ENCODE measurements at regions of chr1 and their contacts with region 1.

Region 1: GRCh38 chr1:206912445-206913095 is 9.2 kb downstream of the FCMR start:
- DNase-seq: peak; percentile 54
- H3K4me3 Mint-ChIP-seq: no peak overlapping the region
- H3K27ac Mint-ChIP-seq: no peak overlapping the region
- H3K4me1 Mint-ChIP-seq: peaks cover 46% of the 10 kb centered on the region
- H3K27me3 Mint-ChIP-seq: peaks cover 11% of the 10 kb centered on the region

Region 2: GRCh38 chr1:206635080-206635977 is 277.2 kb before region 1 on chr1 and contains the start of gene DYRK3:
- intact Hi-C with region 1: loop called (anchors 2 kb)
- DNase-seq: peak; percentile 93
- H3K4me3 Mint-ChIP-seq: peak within 1 kb of the TSS; percentile 85
- H3K27ac Mint-ChIP-seq: peak within 1 kb of the TSS; percentile 95
- H3K4me1 Mint-ChIP-seq: peaks cover 23% of the 10 kb centered on the region
- H3K27me3 Mint-ChIP-seq: peaks cover 14% of the 10 kb centered on the region
- total RNA-seq, gene DYRK3: 12.1 and 13.0 TPM in 2 replicates

Region 3: GRCh38 chr1:206725109-206725963 is 187.2 kb before region 1 on chr1:
- intact Hi-C with region 1: loop called (anchors 1 kb)
- DNase-seq: peak; percentile 45
- H3K4me3 Mint-ChIP-seq: no peak overlapping the region
- H3K27ac Mint-ChIP-seq: no peak overlapping the region
- H3K4me1 Mint-ChIP-seq: peaks cover 52% of the 10 kb centered on the region
- H3K27me3 Mint-ChIP-seq: no peaks in the 10 kb centered on the region

Region 4: DNA sequence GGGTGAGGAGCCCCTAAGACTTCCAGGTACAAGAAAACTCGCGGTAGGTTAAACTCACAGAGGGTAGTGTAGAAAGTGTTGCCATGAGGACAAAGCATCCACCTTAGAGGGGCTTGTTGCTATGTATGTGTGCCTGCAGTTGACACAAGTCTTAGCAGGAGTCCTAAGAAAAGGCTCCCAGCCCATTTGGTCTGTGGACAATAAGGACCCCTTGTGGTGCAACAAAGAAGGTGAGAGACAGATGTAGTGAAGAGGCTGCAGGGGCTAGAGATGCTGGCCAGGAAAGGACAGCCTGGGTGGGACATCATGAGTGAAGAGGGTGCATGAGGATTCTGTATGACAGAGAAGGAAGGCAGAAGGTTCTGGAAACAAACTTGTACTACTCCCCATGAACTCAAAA is 104.0 kb before region 1 on chr1:
- intact Hi-C with region 1: loop called (anchors 1 kb)
- DNase-seq: peak; percentile 47
- H3K4me3 Mint-ChIP-seq: no peak overlapping the region
- H3K27ac Mint-ChIP-seq: no peak overlapping the region
- H3K4me1 Mint-ChIP-seq: peaks cover 48% of the 10 kb centered on the region
- H3K27me3 Mint-ChIP-seq: peaks cover 3% of the 10 kb centered on the region

Region 5: DNA sequence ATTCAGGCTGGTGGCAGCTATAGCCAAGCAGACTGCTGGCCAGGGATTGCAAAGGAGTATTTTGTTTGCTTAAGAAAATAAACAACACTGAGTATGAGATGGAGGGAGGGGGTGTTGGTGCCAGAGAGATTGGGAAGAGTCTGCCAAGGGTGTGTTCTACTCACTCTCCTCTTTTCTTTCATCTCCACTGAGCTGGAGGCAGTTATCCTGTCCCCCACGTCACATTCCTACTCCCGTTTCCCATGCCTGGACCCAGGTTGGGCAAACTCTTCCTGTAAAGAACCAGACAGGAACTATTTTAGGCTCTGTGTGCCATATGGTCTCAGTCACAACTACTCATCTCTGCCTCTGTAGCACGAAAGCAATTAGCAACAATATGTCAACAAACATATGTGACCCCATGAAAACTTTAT is 16.7 kb before region 1 on chr1:
- intact Hi-C with region 1: loop called (anchors 2 kb)
- DNase-seq: no peak
- H3K4me3 Mint-ChIP-seq: no peak overlapping the region
- H3K27ac Mint-ChIP-seq: no peak overlapping the region
- H3K4me1 Mint-ChIP-seq: peaks cover 56% of the 10 kb centered on the region
- H3K27me3 Mint-ChIP-seq: no peaks in the 10 kb centered on the region

Region 6: GRCh38 chr1:206935491-206936067 is 23.0 kb after region 1 on chr1:
- intact Hi-C with region 1: no loop called
- DNase-seq: peak; percentile 29
- H3K4me3 Mint-ChIP-seq: no peak overlapping the region
- H3K27ac Mint-ChIP-seq: no peak overlapping the region
- H3K4me1 Mint-ChIP-seq: peaks cover 11% of the 10 kb centered on the region
- H3K27me3 Mint-ChIP-seq: peaks cover 2% of the 10 kb centered on the region

Region 7: GRCh38 chr1:207181838-207182237 is 269.3 kb after region 1 on chr1:
- intact Hi-C with region 1: no loop called
- DNase-seq: no peak
- H3K4me3 Mint-ChIP-seq: no peak overlapping the region
- H3K27ac Mint-ChIP-seq: no peak overlapping the region
- H3K4me1 Mint-ChIP-seq: no peaks in the 10 kb centered on the region
- H3K27me3 Mint-ChIP-seq: peaks cover 24% of the 10 kb centered on the region

Measured in activated T-helper 2 cell treated with anti-CD3 and anti-CD28 coated beads, Interferon-gamma antibody, Interleukin-2, Interleukin-4, amounts not matched to agents 10 μg/mL and 5 μg/mL and 100 μg/mL, durations not matched to agents 14 hours and 24 hours and 36 hours (primary cell).